HCT116 (cell line): ENCODE measurements at regions of chr5 and their contacts with region 1.

Region 1: DNA sequence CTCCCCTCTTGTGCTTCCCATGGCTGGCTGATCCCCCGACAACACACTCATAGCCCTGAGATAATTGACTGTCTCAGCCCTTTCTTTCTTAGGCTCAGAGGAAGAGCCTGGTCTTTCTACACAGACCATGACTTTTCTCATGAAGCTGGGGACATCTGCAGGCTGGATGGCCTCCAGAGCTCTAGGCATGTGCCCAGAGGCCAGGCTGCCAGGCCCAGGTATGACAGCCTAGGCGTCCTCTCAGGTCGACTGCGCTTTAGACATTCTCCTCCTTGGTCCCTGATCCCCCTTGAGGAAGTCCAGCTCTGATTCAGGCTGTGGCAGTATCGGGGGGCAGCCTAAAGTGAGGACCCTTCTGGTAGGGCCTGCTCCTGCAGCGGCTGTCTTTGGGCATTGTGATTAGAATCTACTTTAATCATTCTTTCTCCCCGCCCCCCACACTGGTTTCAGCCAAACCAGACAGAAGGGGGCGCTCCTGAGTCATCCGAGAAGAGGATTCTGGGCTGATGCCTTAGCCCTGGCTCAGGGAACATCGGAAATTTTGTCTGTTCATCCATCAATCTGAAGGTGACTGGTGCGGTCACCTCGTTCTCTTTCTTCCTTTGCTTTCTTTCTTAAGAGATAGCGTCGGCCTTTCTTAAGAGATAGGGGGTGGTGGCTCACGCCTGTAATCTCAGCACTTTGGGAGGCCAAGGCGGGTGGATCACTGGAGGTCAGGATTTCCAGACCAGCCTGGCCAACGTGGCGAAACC is 66.5 kb upstream of the HSPA9 start:
- DNase-seq: peak; percentile 48
- ATAC-seq: peak; percentile 96
- H3K4me3 ChIP-seq: no peak overlapping the region
- H3K27ac ChIP-seq: no peak overlapping the region
- H3K4me1 ChIP-seq: peaks cover 3 to 8% of the 10 kb centered on the region in 2 experiments; a peak in 3 of 4 replicates
- H3K27me3 ChIP-seq: no peaks in the 10 kb centered on the region
- CTCF ChIP-seq: peak; percentile 88 to 95 (median 94)
- POLR2A ChIP-seq: no peak
- RAD21 ChIP-seq: peak; percentile 95

Region 2: DNA sequence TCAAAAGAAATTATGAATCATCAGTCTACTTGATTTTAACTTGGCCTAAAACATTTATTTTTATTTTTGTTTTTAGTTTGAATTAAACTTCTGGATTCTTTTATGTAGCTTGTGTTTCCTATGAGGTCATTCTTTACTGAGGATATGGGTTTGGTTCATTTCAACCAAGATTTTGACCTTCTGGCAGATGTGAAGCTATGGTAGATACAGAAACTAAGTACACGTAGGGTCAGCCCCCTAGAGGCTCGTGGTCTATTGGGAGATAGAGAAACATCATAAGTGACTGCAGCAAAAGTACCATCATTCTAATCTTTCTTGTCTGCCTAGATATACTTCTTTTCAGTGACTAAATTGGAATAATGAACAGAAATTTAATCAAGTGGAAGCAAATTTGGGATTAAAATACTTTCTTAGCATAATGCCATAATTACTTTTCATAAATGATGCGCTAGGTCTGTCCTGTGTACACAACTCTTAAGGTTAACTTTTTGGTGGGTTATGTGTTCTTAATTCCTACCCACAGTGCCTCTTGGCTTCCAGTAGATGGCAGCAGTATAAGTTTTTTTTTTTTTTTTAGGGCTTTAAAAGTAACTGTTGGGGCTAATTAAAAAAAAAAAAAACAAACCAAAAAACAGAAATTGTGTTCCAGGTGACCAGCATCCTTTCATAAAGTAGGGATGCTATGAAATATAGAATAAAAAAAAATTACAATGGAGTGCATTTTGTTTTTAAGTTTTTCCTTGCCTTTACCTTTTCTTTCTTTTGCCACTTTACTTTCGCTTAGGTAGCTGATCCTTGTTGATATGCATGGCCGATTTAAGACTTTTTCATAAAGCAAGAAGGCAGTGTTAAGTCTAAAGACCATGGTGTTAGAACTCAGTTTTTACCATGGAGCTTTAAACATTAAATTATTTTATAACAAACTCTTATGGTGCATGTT is 183.5 kb after region 1 on chr5:
- CTCF ChIA-PET with region 1: no interaction called
- POLR2A ChIA-PET with region 1: no interaction called
- RAD21 ChIA-PET with region 1: no interaction called
- intact Hi-C with region 1: loop called (anchors 5 kb)
- DNase-seq: no peak
- ATAC-seq: peak; percentile 78
- H3K4me3 ChIP-seq: no peak overlapping the region
- H3K27ac ChIP-seq: no peak overlapping the region
- H3K4me1 ChIP-seq: no peaks in the 10 kb centered on the region
- H3K27me3 ChIP-seq: no peaks in the 10 kb centered on the region
- CTCF ChIP-seq: peak in 2 of 3 experiments; percentile 54 to 64; a peak in 5 of 6 replicates
- POLR2A ChIP-seq: no peak
- RAD21 ChIP-seq: 0 out of 2 replicates have a peak, but pooled peaks have one; percentile 31

Region 3: GRCh38 chr5:138932171-138932810 is 290.6 kb after region 1 on chr5:
- CTCF ChIA-PET with region 1: no interaction called
- POLR2A ChIA-PET with region 1: no interaction called
- RAD21 ChIA-PET with region 1: interaction called in 1 of 2 experiments, 3 read pairs
- intact Hi-C with region 1: loop called (anchors 5 kb)
- DNase-seq: no peak
- ATAC-seq: peak; percentile 49
- H3K4me3 ChIP-seq: no peak overlapping the region
- H3K27ac ChIP-seq: no peak overlapping the region
- H3K4me1 ChIP-seq: no peaks in the 10 kb centered on the region
- H3K27me3 ChIP-seq: no peaks in the 10 kb centered on the region
- CTCF ChIP-seq: peak; percentile 20 to 41 (median 37); a peak in 5 of 6 replicates
- POLR2A ChIP-seq: no peak
- RAD21 ChIP-seq: peak; percentile 43

Region 4: GRCh38 chr5:139004374-139005307 is 362.9 kb after region 1 on chr5:
- CTCF ChIA-PET with region 1: no interaction called
- POLR2A ChIA-PET with region 1: no interaction called
- RAD21 ChIA-PET with region 1: no interaction called
- intact Hi-C with region 1: no loop called
- DNase-seq: no peak
- ATAC-seq: no peak
- H3K4me3 ChIP-seq: no peak overlapping the region
- H3K27ac ChIP-seq: no peak overlapping the region
- H3K4me1 ChIP-seq: no peaks in the 10 kb centered on the region
- H3K27me3 ChIP-seq: no peaks in the 10 kb centered on the region
- CTCF ChIP-seq: no peak
- POLR2A ChIP-seq: no peak
- RAD21 ChIP-seq: no peak

Region 5: GRCh38 chr5:140302786-140303639 is 1661.3 kb after region 1 on chr5 and contains the start of gene PFDN1:
- CTCF ChIA-PET with region 1: no interaction called
- POLR2A ChIA-PET with region 1: no interaction called
- RAD21 ChIA-PET with region 1: no interaction called
- intact Hi-C with region 1: no loop called
- DNase-seq: peak; percentile 81
- ATAC-seq: peak; percentile 91
- H3K4me3 ChIP-seq: peak within 1 kb of the TSS; percentile 79 to 87
- H3K27ac ChIP-seq: peak within 1 kb of the TSS; percentile 47
- H3K4me1 ChIP-seq: peaks cover 22 to 42% of the 10 kb centered on the region in 2 experiments
- H3K27me3 ChIP-seq: no peaks in the 10 kb centered on the region
- CTCF ChIP-seq: no peak
- POLR2A ChIP-seq: peak; percentile 81
- RAD21 ChIP-seq: no peak
- total RNA-seq, gene PFDN1: 48.9 TPM